CD8-positive, alpha-beta T cell (primary cell): ENCODE measurements at regions of chr14 and their contacts with region 1.

Region 1: DNA sequence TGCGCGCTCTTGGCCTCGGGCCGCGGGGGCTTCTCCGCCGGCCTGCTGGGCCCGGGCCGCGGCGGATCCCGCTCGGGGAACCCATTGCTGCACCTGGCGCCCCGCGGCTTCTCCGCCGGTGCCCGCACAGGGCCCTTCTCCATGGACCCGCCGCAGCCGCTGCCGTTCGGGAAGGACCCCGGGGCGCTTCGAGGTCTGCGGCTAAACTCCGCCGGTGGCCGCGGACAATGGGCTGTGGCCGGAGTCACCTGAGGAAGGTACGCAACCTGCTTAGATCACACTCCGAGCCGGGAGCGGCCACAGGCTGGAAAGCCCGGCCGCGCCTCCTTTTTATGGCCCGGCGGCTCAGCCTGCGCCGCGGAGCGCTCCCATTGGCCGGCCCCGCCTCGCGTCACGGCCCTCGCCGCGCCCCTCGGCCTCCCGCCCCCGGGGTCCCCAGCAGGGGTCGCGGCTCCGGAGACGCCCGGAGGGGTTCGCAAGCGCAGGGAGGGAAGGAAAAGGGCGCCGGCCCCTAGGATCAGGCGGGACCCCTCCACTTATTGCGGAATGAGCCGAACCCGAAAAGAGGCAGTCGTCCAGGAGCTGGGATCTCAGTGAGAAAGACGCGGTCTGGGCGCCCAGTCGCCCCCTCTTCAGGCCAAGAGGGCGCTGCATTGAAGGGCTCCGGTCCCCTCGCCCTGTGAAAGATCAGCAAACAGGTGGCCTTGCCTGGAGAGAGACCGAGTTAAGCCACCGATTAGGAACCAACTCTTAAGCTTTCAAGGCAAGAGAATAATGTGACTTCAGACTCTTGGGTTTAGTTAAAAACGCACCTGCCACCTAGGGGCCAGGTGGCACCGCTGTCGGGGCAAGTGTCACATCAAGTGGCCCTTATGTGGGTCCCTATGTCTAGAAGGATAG is at the start of gene GCH1:
- DNase-seq: peak; percentile 51 to 91 (median 73)
- ATAC-seq: peak; percentile 73
- H3K4me3 ChIP-seq: peak within 1 kb of the TSS; percentile 95 to 98
- H3K4me3 Mint-ChIP-seq: peak within 1 kb of the TSS; percentile 92
- H3K27ac ChIP-seq: peak within 1 kb of the TSS; percentile 79 to 89
- H3K27ac Mint-ChIP-seq: peak within 1 kb of the TSS; percentile 91
- H3K4me1 ChIP-seq: peaks cover 11% of the 10 kb centered on the region
- H3K4me1 Mint-ChIP-seq: peaks cover 27% of the 10 kb centered on the region
- H3K27me3 ChIP-seq: no peaks in the 10 kb centered on the region
- H3K27me3 Mint-ChIP-seq: no peaks in the 10 kb centered on the region
- CTCF ChIP-seq: peak; percentile 61
- total RNA-seq, gene GCH1: 30.0 to 30.5 TPM

Region 2: GRCh38 chr14:54366736-54367735 is 535.7 kb before region 1 on chr14:
- CTCF ChIA-PET with region 1: no interaction called
- POLR2A ChIA-PET with region 1: no interaction called
- intact Hi-C with region 1: no loop called
- DNase-seq: peak in 8 of 9 experiments; percentile 9 to 61 (median 39)
- ATAC-seq: peak; percentile 94
- H3K4me3 ChIP-seq: no peak overlapping the region
- H3K4me3 Mint-ChIP-seq: no peak overlapping the region
- H3K27ac ChIP-seq: no peak overlapping the region
- H3K27ac Mint-ChIP-seq: no peak overlapping the region
- H3K4me1 ChIP-seq: no peaks in the 10 kb centered on the region
- H3K4me1 Mint-ChIP-seq: peaks cover 1% of the 10 kb centered on the region
- H3K27me3 ChIP-seq: no peaks in the 10 kb centered on the region
- H3K27me3 Mint-ChIP-seq: peaks cover 5% of the 10 kb centered on the region
- CTCF ChIP-seq: peak; percentile 30

Region 3: DNA sequence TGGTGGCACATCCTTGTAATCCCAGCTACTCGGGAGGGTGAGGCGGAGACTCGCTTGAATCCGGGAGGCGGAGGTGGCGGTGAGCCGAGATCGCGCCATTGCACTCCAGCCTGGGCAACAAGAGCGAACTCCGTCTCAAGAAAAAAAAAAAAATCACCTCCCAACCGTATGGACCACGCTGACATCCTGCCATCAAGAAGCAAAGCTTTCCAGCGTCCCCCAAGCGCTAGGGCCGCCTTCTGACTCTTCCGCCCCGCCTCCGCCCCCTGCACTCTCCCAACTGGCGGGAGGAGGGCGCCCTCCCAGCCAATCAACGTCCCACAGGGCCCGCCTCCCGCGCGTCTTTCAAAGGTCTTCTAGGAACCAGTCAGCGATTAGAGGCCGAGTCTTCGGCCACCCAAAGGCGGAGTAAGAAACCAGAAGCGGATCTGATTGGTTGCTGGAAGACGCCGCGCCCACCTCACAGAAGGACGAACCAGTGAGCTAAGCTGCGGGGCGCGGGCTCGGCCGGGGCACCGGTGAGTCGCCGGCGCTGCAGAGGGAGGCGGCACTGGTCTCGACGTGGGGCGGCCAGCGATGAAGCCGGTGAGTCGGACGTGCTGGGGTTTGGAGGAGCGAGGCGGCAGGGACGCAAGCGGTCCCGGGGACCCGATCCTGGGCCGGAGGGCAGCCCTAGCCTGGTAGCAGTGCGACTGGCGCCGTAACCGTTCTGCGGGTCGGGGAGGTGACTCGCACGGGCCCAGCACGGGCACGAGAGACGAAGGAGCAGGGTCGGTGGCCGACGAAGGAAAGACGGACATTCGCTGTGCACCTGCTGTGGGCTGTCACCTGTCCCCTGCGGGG is 506.1 kb before region 1 on chr14 and contains the start of gene CDKN3:
- CTCF ChIA-PET with region 1: no interaction called
- POLR2A ChIA-PET with region 1: no interaction called
- intact Hi-C with region 1: loop called in 1 of 2 experiments (anchors 5 kb)
- DNase-seq: peak; percentile 94 to 98 (median 96)
- ATAC-seq: peak; percentile 95
- H3K4me3 ChIP-seq: peak within 1 kb of the TSS; percentile 80 to 96
- H3K4me3 Mint-ChIP-seq: peak within 1 kb of the TSS; percentile 86
- H3K27ac ChIP-seq: peak within 1 kb of the TSS; percentile 23 to 46
- H3K27ac Mint-ChIP-seq: peak within 1 kb of the TSS; percentile 47
- H3K4me1 ChIP-seq: peaks cover 4% of the 10 kb centered on the region
- H3K4me1 Mint-ChIP-seq: peaks cover 9% of the 10 kb centered on the region
- H3K27me3 ChIP-seq: no peaks in the 10 kb centered on the region
- H3K27me3 Mint-ChIP-seq: no peaks in the 10 kb centered on the region
- CTCF ChIP-seq: no peak
- total RNA-seq, gene CDKN3: 0.56 to 0.68 TPM

Region 4: DNA sequence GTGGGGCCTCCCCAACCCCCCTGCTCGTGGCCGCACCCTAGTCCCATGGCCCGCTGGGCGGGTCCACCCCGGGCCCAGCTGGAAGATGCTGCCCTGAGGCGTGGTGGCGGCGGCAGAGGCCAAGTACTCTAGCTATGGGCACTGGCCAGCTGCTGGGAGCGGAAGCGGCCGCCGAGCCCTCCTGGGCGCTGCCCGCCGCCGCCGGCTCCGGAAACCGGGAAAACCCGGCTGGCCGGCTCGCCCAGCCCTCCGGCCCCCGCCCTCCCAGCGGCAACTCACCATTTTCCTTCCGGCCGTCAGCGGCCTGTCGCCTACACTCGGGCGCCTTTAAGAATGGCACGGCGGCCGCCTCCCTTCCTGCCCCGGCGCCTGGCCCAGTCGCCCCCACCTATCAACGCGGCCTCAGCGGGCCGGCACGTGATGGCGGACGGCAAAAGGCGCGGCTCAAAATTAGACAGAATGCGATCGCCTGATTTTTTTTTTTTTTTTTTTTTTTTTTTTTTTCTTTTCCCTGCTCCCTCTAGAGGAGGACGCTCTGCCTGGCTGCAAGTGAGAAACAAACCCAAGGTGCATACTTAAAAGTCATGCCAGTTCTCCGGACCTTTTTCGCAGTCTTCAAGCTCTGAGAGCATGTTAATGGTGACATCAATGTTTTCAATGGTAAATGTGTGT is 414.0 kb before region 1 on chr14 and contains the start of gene GMFB:
- CTCF ChIA-PET with region 1: no interaction called
- POLR2A ChIA-PET with region 1: no interaction called
- intact Hi-C with region 1: loop called in 1 of 2 experiments (anchors 5 kb)
- DNase-seq: peak; percentile 77 to 94 (median 89)
- ATAC-seq: peak; percentile 96
- H3K4me3 ChIP-seq: peak within 1 kb of the TSS; percentile 73 to 92
- H3K4me3 Mint-ChIP-seq: peak within 1 kb of the TSS; percentile 90
- H3K27ac ChIP-seq: peak within 1 kb of the TSS; percentile 66 to 89
- H3K27ac Mint-ChIP-seq: peak within 1 kb of the TSS; percentile 94
- H3K4me1 ChIP-seq: peaks cover 38% of the 10 kb centered on the region
- H3K4me1 Mint-ChIP-seq: peaks cover 61% of the 10 kb centered on the region
- H3K27me3 ChIP-seq: no peaks in the 10 kb centered on the region
- H3K27me3 Mint-ChIP-seq: no peaks in the 10 kb centered on the region
- CTCF ChIP-seq: peak; percentile 17
- total RNA-seq, gene GMFB: 33.7 to 34.0 TPM

Region 5: GRCh38 chr14:54805521-54806322 is 97.0 kb before region 1 on chr14:
- CTCF ChIA-PET with region 1: interaction called, 20 read pairs
- POLR2A ChIA-PET with region 1: no interaction called
- intact Hi-C with region 1: no loop called
- DNase-seq: peak; percentile 36 to 82 (median 71)
- ATAC-seq: peak; percentile 82
- H3K4me3 ChIP-seq: no peak overlapping the region
- H3K4me3 Mint-ChIP-seq: no peak overlapping the region
- H3K27ac ChIP-seq: no peak overlapping the region
- H3K27ac Mint-ChIP-seq: no peak overlapping the region
- H3K4me1 ChIP-seq: no peaks in the 10 kb centered on the region
- H3K4me1 Mint-ChIP-seq: peaks cover 5% of the 10 kb centered on the region
- H3K27me3 ChIP-seq: no peaks in the 10 kb centered on the region
- H3K27me3 Mint-ChIP-seq: peaks cover 8% of the 10 kb centered on the region
- CTCF ChIP-seq: peak; percentile 76

Region 6: DNA sequence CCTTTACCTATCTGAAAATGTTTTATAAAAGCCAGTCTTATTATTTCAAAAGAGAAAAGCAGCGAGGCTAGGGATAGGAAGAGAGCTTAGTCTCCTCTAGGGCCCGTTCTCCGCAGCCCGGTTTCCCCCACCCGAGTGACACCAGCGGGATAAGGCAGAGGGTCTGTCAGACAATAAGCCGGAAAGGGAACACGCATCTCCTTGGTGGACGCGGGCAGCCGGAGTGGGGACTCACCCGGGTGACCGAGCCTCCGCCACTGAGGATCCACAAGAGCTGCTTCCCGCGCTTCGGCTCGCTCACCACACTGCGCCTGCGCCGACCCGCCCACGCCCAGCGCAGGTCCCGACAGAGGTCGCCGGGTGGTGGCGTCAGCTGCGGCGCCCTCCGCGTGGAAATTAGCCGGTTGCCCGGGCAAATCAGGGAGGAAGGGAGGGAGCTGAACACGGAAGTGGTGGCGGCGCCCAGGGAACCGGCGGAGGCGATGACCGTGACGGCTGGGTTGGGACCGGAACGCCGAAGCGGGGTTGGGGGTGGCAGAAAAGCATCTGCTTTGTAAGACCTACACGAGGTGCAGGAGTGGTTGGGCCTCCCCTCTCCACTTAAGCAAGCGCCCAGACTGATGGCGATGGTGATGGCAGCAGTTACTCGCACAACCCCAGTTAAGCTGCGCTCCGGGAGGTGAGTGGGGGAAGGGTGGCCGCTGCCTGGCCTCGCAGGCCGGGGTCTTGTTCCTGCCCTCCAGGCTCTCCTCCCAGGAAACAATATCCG is 124.2 kb after region 1 on chr14 and contains the starts of genes SOCS4 and WDHD1:
- CTCF ChIA-PET with region 1: interaction called, 3 read pairs
- POLR2A ChIA-PET with region 1: no interaction called
- intact Hi-C with region 1: loop called (anchors 2 kb)
- DNase-seq: peak; percentile 87 to 97 (median 94)
- ATAC-seq: peak; percentile 86
- H3K4me3 ChIP-seq: peak within 1 kb of the TSS; percentile 71 to 91
- H3K4me3 Mint-ChIP-seq: peak within 1 kb of the TSS; percentile 95
- H3K27ac ChIP-seq: peak within 1 kb of the TSS; percentile 80 to 95
- H3K27ac Mint-ChIP-seq: peak within 1 kb of the TSS; percentile 95
- H3K4me1 ChIP-seq: peaks cover 37% of the 10 kb centered on the region
- H3K4me1 Mint-ChIP-seq: peaks cover 54% of the 10 kb centered on the region
- H3K27me3 ChIP-seq: no peaks in the 10 kb centered on the region
- H3K27me3 Mint-ChIP-seq: no peaks in the 10 kb centered on the region
- CTCF ChIP-seq: no peak
- total RNA-seq, gene SOCS4: 22.6 to 24.0 TPM
- total RNA-seq, gene WDHD1: 1.2 to 1.6 TPM

Region 7: DNA sequence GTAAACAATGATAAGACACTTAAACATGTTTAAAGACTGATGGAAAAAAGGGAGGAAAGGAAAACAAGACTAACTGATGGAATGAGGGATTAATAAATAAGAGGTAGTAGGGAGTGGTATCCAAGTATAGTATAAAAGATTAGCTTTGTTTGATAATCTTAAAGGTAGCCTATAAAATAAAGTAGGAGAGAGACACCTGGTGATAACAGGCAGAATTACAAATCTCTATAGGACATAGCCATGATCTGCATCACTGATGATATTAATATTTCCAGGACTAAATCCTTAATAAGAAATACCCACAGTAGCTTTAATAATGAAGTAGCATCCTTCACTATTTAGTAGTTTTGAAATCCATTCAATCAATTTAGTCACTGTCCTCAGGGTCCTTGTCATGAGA is 258.2 kb after region 1 on chr14:
- CTCF ChIA-PET with region 1: no interaction called
- POLR2A ChIA-PET with region 1: no interaction called
- intact Hi-C with region 1: loop called (anchors 5 to 10 kb)
- DNase-seq: peak in 2 of 9 experiments; percentile 57 to 69
- ATAC-seq: peak; percentile 88
- H3K4me3 ChIP-seq: no peak overlapping the region
- H3K4me3 Mint-ChIP-seq: no peak overlapping the region
- H3K27ac ChIP-seq: no peak overlapping the region
- H3K27ac Mint-ChIP-seq: no peak overlapping the region
- H3K4me1 ChIP-seq: no peaks in the 10 kb centered on the region
- H3K4me1 Mint-ChIP-seq: peaks cover 4% of the 10 kb centered on the region
- H3K27me3 ChIP-seq: no peaks in the 10 kb centered on the region
- H3K27me3 Mint-ChIP-seq: no peaks in the 10 kb centered on the region
- CTCF ChIP-seq: peak; percentile 68

Region 8: DNA sequence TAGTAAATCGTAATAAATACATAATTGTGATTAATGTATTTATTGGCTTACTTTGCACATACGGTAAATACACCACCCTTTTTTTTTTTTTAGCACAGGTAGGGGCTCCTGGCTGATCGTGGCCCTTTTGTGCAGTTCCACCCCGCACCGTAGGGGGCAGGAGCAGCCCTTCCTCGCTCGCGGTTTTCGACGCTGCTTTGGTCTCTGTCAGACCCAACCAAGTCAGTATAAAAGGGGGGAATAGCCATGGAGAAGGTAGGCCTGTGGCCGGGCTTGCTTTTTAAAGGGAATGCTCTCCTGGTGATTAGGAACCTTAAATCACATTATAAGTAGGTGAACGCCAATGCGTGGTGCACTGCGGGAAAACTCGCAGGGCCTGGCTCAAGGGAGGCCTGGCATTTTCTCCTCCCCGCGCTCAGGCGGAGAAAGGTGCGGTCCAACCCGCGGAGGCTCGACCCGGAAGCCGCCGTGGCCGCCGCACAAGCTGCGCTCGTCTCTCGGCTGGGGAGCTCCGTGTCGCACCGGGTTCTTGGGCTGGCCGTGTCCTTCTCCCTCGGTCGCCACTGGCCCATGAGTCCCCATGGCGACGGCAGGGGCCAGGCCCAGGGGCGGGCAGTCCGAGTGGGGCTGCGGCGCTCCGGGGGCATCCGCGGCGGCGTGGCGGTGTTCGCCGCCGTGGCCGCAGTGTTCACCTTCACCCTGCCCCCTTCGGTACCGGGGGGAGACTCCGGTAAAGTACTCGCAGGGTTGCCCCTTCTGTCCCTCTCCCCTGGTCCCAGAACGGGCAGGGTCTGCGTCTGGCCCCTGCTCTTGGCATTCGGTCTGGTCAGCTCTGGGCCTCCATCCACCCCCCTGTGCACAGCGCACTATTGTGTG is 1676.8 kb after region 1 on chr14 and contains the start of gene TMEM260:
- CTCF ChIA-PET with region 1: no interaction called
- POLR2A ChIA-PET with region 1: no interaction called
- intact Hi-C with region 1: loop called in 1 of 2 experiments (anchors 10 kb)
- DNase-seq: peak; percentile 84 to 95 (median 91)
- ATAC-seq: peak; percentile 93
- H3K4me3 ChIP-seq: peak within 1 kb of the TSS; percentile 74 to 83
- H3K4me3 Mint-ChIP-seq: peak within 1 kb of the TSS; percentile 90
- H3K27ac ChIP-seq: peak within 1 kb of the TSS; percentile 72 to 75
- H3K27ac Mint-ChIP-seq: peak within 1 kb of the TSS; percentile 94
- H3K4me1 ChIP-seq: peaks cover 27% of the 10 kb centered on the region
- H3K4me1 Mint-ChIP-seq: peaks cover 40% of the 10 kb centered on the region
- H3K27me3 ChIP-seq: no peaks in the 10 kb centered on the region
- H3K27me3 Mint-ChIP-seq: peaks cover 2% of the 10 kb centered on the region
- CTCF ChIP-seq: peak; percentile 82
- total RNA-seq, gene TMEM260: 4.3 to 6.4 TPM